OCI-LY7 (cell line): ENCODE measurements at regions of chr6 and their contacts with region 1.

Region 1: DNA sequence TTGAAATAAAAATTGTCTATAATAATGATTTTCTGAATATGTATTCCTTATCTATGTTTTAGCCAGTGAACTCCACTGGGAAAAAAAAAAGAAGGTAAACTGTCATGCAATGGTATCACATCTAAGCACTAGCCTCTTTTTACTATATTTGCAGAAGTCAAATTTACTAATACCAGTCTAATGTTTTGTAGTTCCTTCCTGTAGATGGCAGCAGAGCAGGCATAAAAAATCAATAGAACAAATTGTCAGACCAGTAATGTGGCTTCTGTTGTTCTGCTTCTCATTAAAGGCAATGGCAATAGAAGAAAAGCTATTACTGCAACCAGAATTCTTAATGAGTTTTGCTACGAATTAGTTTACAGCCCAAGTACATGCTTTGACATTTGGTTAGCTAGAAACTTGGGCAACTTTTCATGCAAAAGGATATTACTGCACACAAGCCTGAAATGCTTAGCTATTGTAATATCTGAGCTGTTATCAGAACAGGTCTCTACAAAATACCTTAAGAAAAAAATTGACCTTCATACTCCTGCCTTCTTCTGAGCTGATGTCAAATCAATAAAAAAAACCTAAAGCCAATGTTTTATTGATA is 476.9 kb downstream of the KHDRBS2 start:
- DNase-seq: peak; percentile 23
- H3K4me3 ChIP-seq: no peak overlapping the region
- H3K27ac ChIP-seq: no peak overlapping the region
- H3K4me1 ChIP-seq: no peaks in the 10 kb centered on the region
- CTCF ChIP-seq: peak; percentile 81

Region 2: GRCh38 chr6:62150048-62150663 is 341.1 kb after region 1 on chr6:
- CTCF ChIA-PET with region 1: no interaction called
- POLR2A ChIA-PET with region 1: no interaction called
- intact Hi-C with region 1: loop called (anchors 5 kb)
- DNase-seq: peak; percentile 45
- H3K4me3 ChIP-seq: no peak overlapping the region
- H3K27ac ChIP-seq: no peak overlapping the region
- H3K4me1 ChIP-seq: no peaks in the 10 kb centered on the region
- CTCF ChIP-seq: peak; percentile 88

Region 3: DNA sequence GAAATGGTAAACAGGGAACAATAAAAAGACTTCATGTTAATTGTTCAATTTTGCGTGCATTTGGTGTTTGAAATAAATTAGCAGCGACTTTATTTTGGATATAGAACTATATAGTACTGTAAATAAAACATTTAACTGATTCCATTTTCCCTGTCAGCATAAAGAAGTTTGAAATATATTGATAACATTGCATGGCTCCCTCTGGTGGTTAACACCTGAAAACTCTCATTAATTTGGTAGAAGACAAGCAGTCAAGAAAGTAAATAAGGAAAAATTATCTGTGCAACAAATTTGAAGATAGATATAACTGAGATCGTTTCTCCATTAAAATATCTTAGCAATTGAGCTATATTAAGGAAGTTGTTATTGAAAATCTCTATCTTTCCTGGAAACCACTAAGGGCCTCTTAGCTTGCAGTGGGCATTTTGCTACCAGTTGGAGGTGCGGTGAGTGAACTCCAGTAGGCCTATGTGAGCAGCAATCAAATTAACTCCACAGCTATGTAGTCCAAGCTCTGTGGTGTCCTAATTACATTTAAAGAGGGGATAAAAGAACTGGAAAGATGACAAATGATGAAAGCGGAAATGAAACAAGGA is 966.4 kb after region 1 on chr6:
- CTCF ChIA-PET with region 1: no interaction called
- POLR2A ChIA-PET with region 1: no interaction called
- intact Hi-C with region 1: loop called (anchors 5 kb)
- DNase-seq: peak; percentile 44
- H3K4me3 ChIP-seq: no peak overlapping the region
- H3K27ac ChIP-seq: no peak overlapping the region
- H3K4me1 ChIP-seq: no peaks in the 10 kb centered on the region
- CTCF ChIP-seq: peak; percentile 93